SK-N-SH (cell line): ENCODE measurements at regions of chr2 and their contacts with region 1.

Region 1: DNA sequence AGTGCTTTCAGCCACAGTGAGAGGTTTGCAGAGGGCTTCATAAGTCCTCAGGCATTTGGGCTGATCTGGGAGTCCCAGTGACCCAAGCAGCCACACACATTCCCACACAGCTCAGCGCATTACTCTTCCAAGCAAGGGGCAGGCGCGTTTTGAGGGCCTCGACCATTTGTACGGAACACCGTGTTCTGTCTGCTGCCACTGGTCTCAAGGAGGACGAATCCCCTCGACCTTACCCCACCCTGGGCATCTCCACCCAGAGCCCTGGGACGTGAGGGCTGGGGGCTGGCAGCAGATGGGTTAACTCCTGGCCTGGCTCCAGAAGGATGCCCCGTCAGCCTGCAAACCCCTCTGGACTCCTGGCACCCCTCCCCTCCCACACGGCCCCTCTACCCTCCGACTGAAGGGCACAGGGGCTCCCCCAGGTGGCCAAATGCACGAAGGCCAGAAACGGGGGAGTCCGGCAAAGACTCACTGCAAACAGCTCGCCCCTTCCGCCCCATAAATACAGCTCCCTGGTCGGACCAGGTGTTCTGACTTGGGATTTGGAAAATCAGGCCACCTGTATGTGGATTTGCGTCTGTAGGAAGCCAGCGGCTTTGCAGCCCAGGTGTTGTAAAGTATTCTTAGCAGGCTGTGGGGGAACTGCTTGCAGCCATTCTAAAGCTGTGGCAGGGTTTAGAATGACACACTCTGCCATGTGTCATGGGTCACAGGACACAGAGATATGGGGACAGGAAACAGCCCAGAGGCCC is 33.6 kb upstream of the PTMA start:
- DNase-seq: peak; percentile 90
- H3K4me3 ChIP-seq: no peak overlapping the region
- H3K27ac ChIP-seq: no peak overlapping the region
- H3K4me1 ChIP-seq: peaks cover 0 to 12% of the 10 kb centered on the region in 2 experiments; a peak in 1 of 4 replicates
- H3K27me3 ChIP-seq: no peaks in the 10 kb centered on the region
- CTCF ChIP-seq: peak; percentile 84
- EP300 ChIP-seq: no peak
- RAD21 ChIP-seq: peak; percentile 73

Region 2: DNA sequence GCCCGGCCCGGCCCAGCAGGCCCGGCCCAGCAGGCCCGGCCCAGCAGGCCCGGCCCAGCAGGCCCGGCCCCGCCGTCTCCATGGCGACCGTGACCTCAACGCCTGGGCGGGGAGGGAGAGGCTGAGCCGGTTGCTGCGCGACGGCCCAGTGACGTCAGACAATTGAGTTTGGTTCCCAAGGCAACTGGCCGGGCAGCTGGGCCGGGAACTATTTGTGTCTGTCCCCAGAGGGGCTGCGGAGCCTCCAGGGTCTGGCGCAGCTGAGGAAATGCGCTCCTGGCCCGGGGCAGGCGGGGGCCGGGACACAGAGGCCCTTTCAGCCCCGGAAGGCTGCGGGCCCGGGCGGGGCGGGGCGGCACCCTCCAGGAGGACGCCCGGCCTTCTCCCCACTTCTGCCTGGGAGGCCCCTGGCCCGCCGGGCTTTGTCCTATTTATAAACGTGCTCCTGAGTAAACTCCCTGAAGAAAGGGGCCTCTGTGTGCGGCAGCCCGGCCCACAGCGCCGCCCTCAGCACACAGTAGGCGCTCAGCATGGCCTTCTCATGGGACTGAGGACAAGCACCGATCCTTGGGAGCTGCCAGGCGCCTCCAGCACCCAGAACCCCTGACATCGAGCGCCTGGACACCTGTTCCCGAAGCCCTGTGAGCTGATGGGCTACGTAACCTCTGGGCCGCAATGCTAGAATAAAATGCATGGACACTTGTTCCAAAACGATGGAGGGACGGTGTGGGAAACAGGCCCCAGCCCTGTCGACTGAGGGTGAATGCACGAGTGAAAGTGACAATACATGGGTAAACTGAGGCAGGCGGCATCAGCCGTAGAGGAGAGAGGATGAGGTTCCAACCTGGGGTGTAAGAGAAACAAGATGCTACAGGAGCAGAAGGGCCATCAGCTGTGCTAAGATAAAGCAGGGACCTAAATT is 69.8 kb before region 1 on chr2:
- CTCF ChIA-PET with region 1: interaction called, 256 read pairs
- POLR2A ChIA-PET with region 1: interaction called, 4 read pairs
- DNase-seq: peak; percentile 99
- H3K4me3 ChIP-seq: peak overlapping the region; percentile 51 to 66
- H3K27ac ChIP-seq: peak overlapping the region; percentile 96
- H3K4me1 ChIP-seq: peaks cover 10 to 28% of the 10 kb centered on the region in 2 experiments
- H3K27me3 ChIP-seq: no peaks in the 10 kb centered on the region
- CTCF ChIP-seq: no peak
- EP300 ChIP-seq: peak in 1 of 2 experiments; percentile 19; a peak in 1 of 4 replicates
- RAD21 ChIP-seq: no peak

Region 3: DNA sequence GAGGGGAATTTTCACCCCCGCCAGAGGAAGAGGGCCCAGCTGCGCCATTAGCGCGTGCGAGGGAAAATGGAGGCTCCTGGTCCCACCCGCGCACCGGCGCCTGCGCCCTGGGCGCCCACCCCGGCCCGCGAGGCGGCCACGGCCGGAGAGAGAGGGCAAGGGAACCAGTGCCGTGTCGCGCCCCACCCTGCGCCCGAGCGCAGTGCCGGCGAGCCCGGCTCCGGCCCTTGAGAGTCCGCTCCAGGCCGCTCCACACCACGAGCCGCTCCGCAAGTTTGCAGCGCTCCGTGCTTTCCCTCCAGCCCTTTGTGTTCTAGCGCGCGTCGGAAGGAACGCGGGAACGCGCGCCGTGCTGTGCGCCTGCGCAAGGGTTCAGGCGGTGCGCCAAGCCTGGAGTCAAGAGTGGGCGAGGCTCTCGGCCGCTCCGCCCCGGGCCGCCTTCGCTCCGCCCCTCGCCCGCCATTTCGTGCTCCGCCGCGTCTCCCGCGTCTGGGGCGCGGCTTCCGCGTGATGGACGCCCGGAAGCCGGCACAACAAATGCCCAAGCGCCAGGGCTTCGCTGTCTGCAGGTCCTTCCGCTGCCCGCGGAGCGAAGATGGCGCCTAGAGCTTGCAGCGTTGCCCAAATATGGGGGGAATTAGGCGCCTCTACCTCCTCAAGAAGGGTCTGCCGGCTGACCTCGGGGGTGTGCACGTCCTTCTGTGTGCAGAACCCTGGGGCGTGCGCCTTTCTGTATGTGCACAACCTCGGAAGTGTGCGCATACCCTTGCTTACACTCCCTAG is 12.5 kb before region 1 on chr2:
- CTCF ChIA-PET with region 1: interaction called, 283 read pairs
- POLR2A ChIA-PET with region 1: no interaction called
- DNase-seq: peak; percentile 38
- H3K4me3 ChIP-seq: no peak overlapping the region
- H3K27ac ChIP-seq: no peak overlapping the region
- H3K4me1 ChIP-seq: peaks cover 6 to 9% of the 10 kb centered on the region in 2 experiments; a peak in 2 of 4 replicates
- H3K27me3 ChIP-seq: no peaks in the 10 kb centered on the region
- CTCF ChIP-seq: no peak
- EP300 ChIP-seq: no peak
- RAD21 ChIP-seq: no peak

Region 4: GRCh38 chr2:231706731-231707624 is 32.2 kb after region 1 on chr2:
- CTCF ChIA-PET with region 1: interaction called, 1,218 read pairs
- POLR2A ChIA-PET with region 1: interaction called, 11 read pairs
- DNase-seq: peak; percentile 93
- H3K4me3 ChIP-seq: peak overlapping the region; percentile 80 to 83
- H3K27ac ChIP-seq: peak overlapping the region; percentile 92 to 100
- H3K4me1 ChIP-seq: peaks cover 5 to 20% of the 10 kb centered on the region in 2 experiments; a peak in 2 of 4 replicates
- H3K27me3 ChIP-seq: no peaks in the 10 kb centered on the region
- CTCF ChIP-seq: peak; percentile 98
- EP300 ChIP-seq: peak in 1 of 2 experiments; percentile 9; a peak in 1 of 4 replicates
- RAD21 ChIP-seq: no peak

Region 5: GRCh38 chr2:231795291-231796040 is 120.7 kb after region 1 on chr2:
- CTCF ChIA-PET with region 1: interaction called, 10 read pairs
- POLR2A ChIA-PET with region 1: interaction called, 3 read pairs
- DNase-seq: peak; percentile 78
- H3K4me3 ChIP-seq: no peak overlapping the region
- H3K27ac ChIP-seq: peak overlapping the region; percentile 2 to 91; a peak in 3 of 4 replicates
- H3K4me1 ChIP-seq: peaks cover 0 to 29% of the 10 kb centered on the region in 2 experiments; a peak in 2 of 4 replicates
- H3K27me3 ChIP-seq: no peaks in the 10 kb centered on the region
- CTCF ChIP-seq: peak; percentile 63
- EP300 ChIP-seq: peak in 1 of 2 experiments; percentile 71; a peak in 2 of 4 replicates
- RAD21 ChIP-seq: peak; percentile 28; the same call in 1 of the 2 replicates

Region 6: GRCh38 chr2:232230557-232230956 is 555.8 kb after region 1 on chr2:
- CTCF ChIA-PET with region 1: no interaction called
- POLR2A ChIA-PET with region 1: no interaction called
- DNase-seq: no peak
- H3K4me3 ChIP-seq: no peak overlapping the region
- H3K27ac ChIP-seq: no peak overlapping the region
- H3K4me1 ChIP-seq: peaks cover 0 to 3% of the 10 kb centered on the region in 2 experiments; a peak in 1 of 4 replicates
- H3K27me3 ChIP-seq: no peaks in the 10 kb centered on the region
- CTCF ChIP-seq: peak; percentile 26; the same call in 1 of the 2 replicates
- EP300 ChIP-seq: no peak
- RAD21 ChIP-seq: no peak